Activated naive CD4-positive, alpha-beta T cell treated with anti-CD3 and anti-CD28 coated beads for 36 hours (primary cell): ENCODE measurements at regions of chr11 and their contacts with region 1.

Region 1: GRCh38 chr11:12110201-12110713 is at the start of gene MICAL2:
- DNase-seq: peak; percentile 83
- H3K4me3 Mint-ChIP-seq: peak within 1 kb of the TSS; percentile 83
- H3K27ac Mint-ChIP-seq: peak within 1 kb of the TSS; percentile 91
- H3K4me1 Mint-ChIP-seq: peaks cover 25% of the 10 kb centered on the region
- H3K27me3 Mint-ChIP-seq: no peaks in the 10 kb centered on the region
- total RNA-seq, gene MICAL2: 48.7 to 54.6 TPM

Region 2: DNA sequence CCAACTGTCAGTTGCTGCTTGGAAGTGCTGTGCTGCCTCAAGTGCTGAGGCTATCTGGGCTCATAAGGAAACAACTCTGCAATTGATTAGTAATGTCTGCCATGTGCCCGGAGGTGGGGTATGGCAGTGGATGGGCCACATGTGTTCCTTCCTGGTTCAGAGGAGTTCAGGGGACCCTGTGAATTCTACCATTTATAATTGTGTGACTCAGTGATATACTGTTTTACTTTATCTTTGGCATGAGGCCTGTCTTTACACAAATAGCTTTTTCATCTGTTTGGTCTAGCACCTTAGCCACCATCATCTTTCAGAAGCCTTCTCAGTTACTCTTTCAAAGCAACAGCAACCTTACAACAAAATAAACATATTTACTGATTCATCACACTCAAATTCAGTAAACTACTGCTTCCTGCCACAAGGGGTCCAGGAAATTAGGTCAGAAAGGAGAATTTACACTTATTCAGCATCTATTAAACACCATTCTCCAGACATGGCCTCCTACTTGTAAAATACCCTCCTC is 122.7 kb before region 1 on chr11:
- CTCF ChIA-PET with region 1: no interaction called
- intact Hi-C with region 1: no loop called
- DNase-seq: no peak
- H3K4me3 Mint-ChIP-seq: no peak overlapping the region
- H3K27ac Mint-ChIP-seq: no peak overlapping the region
- H3K4me1 Mint-ChIP-seq: peaks cover 2% of the 10 kb centered on the region
- H3K27me3 Mint-ChIP-seq: no peaks in the 10 kb centered on the region

Region 3: GRCh38 chr11:12087075-12088004 is 22.9 kb before region 1 on chr11:
- CTCF ChIA-PET with region 1: interaction called, 6 read pairs
- intact Hi-C with region 1: loop called (anchors 2 kb)
- DNase-seq: peak; percentile 37
- H3K4me3 Mint-ChIP-seq: no peak overlapping the region
- H3K27ac Mint-ChIP-seq: no peak overlapping the region
- H3K4me1 Mint-ChIP-seq: peaks cover 41% of the 10 kb centered on the region
- H3K27me3 Mint-ChIP-seq: no peaks in the 10 kb centered on the region

Region 4: DNA sequence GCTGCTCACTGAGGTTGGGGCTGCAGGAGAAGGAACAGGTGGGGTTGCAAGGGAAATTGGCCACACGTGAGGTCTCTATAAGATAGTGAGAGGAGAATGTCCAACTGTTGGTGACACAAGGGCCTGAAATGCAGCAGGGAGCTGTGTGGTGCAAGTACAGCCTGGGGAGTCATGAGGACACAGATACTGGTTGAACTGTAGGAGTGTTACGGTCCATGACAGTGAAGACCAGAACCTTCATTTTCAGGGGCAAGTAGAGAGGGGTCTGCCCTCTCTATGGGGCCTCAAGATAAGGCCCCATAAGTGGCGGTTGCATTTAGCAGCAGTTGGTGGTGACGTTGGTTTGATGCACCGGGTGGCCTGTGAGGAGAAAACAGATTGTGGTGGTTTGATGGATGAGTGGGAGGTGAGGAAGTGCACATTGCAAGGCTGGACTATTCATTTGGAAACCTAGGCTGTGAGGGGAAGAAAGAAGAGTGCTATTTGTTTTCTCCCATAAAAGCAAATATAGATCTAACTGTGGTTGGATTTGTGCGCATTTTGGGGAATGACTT is 39.5 kb after region 1 on chr11:
- CTCF ChIA-PET with region 1: interaction called, 4 read pairs
- intact Hi-C with region 1: loop called (anchors 1 kb)
- DNase-seq: peak; percentile 80
- H3K4me3 Mint-ChIP-seq: peak overlapping the region; percentile 3
- H3K27ac Mint-ChIP-seq: peak overlapping the region; percentile 87
- H3K4me1 Mint-ChIP-seq: peaks cover 48% of the 10 kb centered on the region
- H3K27me3 Mint-ChIP-seq: no peaks in the 10 kb centered on the region

Region 5: DNA sequence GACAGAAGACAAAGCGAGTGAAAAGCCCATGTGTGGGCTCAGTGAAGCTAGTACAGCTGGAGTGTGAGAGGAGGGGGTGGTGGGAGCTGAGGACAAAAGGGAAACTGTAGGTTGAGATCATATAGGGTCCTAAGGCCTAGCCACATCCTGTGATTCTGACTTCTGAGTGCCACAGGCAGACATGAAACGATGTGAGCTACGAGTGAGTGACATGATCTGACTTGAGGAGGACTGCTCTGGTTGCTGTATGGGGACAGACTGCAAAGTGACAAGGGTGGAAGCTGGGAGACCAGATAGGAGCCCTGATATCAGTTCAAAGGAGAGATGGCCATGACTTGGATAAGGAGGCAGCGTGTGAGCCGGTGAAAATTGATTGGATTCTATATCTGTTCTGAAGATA is 85.5 kb after region 1 on chr11:
- CTCF ChIA-PET with region 1: no interaction called
- intact Hi-C with region 1: no loop called
- DNase-seq: peak; percentile 72
- H3K4me3 Mint-ChIP-seq: peak overlapping the region; percentile 79
- H3K27ac Mint-ChIP-seq: peak overlapping the region; percentile 90
- H3K4me1 Mint-ChIP-seq: peaks cover 70% of the 10 kb centered on the region
- H3K27me3 Mint-ChIP-seq: no peaks in the 10 kb centered on the region

Region 6: GRCh38 chr11:12224537-12224893 is 114.3 kb after region 1 on chr11:
- CTCF ChIA-PET with region 1: no interaction called
- intact Hi-C with region 1: loop called (anchors 1 kb)
- DNase-seq: peak; percentile 97
- H3K4me3 Mint-ChIP-seq: peak overlapping the region; percentile 64
- H3K27ac Mint-ChIP-seq: peak overlapping the region; percentile 82
- H3K4me1 Mint-ChIP-seq: peaks cover 31% of the 10 kb centered on the region
- H3K27me3 Mint-ChIP-seq: no peaks in the 10 kb centered on the region

Region 7: DNA sequence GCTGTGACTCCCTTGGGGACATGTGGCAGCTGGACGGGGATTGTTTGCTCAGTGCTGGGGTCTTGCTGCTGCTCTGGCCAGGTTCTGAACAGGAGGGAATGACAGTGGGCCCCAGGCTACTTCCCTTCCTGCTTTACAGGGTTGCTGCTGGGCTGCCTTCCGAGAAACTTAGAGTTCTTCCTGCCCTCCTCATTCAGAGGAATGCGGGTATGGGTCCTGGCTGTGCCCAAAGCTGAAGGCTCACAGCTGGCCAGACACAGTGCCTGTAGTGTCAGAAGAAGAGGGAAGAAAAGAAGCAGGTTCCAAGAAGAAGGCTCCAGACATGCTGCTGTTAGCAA is 158.8 kb after region 1 on chr11:
- CTCF ChIA-PET with region 1: no interaction called
- intact Hi-C with region 1: no loop called
- DNase-seq: no peak
- H3K4me3 Mint-ChIP-seq: no peak overlapping the region
- H3K27ac Mint-ChIP-seq: no peak overlapping the region
- H3K4me1 Mint-ChIP-seq: no peaks in the 10 kb centered on the region
- H3K27me3 Mint-ChIP-seq: no peaks in the 10 kb centered on the region

Region 8: DNA sequence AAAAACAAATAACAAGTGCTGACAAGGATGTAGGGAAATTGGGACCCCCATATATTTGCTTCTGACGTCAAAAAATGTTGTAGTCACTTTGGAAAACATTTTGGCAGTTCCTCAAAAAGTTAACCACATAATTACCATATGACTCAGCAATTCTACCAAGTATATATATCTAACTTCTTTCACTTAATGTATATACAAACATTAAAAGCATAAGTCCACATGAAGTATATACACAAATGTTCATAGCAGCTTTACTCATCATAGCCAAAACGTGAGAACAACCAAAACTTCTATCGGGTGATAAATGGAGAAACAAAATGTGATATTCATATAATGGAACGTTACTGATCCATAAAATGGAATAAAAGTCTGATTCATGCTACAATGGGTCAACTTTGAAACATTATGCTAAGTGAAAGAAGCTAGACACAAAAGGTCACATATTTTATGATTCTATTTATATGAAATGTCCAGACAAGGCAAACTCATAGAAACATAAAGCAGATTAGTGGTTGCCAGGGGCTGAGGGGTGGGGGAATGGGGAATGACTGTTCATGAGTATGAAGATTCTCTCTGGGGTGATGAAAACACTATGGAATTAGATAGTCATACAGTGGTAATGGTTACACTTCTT is 515.3 kb after region 1 on chr11:
- CTCF ChIA-PET with region 1: no interaction called
- intact Hi-C with region 1: no loop called
- DNase-seq: no peak
- H3K4me3 Mint-ChIP-seq: no peak overlapping the region
- H3K27ac Mint-ChIP-seq: no peak overlapping the region
- H3K4me1 Mint-ChIP-seq: no peaks in the 10 kb centered on the region
- H3K27me3 Mint-ChIP-seq: peaks cover 7% of the 10 kb centered on the region